Colonic mucosa (tissue), 4 donors: ENCODE measurements at regions of chr4 and their contacts with region 1.

Region 1: DNA sequence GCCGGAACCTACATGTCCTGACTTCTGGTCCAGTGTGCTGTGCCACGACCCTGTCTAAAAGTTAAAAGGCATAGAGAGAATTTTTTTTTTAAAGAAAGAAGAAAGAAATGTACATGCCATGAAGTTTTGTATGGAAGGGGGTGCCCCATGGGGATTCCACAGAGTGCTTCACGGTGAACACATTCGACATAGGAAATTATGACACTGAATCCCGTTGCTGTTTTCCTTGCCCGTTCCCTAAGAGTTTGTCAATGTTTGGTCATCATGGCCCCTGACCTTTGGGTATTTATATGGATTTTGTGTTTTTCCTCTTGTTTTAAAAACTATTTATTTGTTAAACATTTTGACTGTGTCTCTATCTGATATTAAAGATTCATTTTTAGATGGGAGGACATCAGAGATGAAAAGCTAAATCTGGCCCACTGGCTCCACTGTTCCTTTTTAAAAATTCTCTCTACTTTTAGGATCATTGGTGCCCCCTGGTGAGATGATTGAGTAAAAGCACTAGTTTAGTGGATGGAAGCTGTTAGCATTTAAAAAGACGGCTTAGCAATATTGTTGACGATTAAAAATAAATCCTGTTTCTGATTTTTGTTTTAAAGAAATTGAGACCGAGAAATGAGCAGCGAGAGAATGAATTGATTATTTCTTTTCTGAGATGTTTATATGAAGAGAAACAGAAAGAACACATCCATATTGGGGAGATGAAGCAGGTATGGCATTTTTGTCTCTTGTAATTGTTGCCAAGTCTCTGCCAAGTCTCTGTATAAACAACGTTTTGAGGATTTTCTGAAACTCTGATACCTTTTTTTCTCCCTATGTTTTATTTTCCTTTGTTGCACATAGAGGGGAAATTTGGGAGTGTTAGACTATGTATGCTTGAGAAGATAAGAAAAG is 75.0 kb downstream of the PTTG2 start:
- DNase-seq: peak; percentile 55
- H3K4me3 ChIP-seq: no peak overlapping the region
- H3K27ac ChIP-seq: no peak overlapping the region
- H3K4me1 ChIP-seq: no peaks in the 10 kb centered on the region
- H3K27me3 ChIP-seq: no peaks in the 10 kb centered on the region
- CTCF ChIP-seq: peak; percentile 62

Region 2: GRCh38 chr4:37603070-37603468 is 432.2 kb before region 1 on chr4:
- intact Hi-C with region 1: loop called (anchors 10 kb)
- DNase-seq: peak; percentile 91
- H3K4me3 ChIP-seq: no peak overlapping the region
- H3K27ac ChIP-seq: no peak overlapping the region
- H3K4me1 ChIP-seq: no peaks in the 10 kb centered on the region
- H3K27me3 ChIP-seq: no peaks in the 10 kb centered on the region
- CTCF ChIP-seq: peak; percentile 94

Region 3: GRCh38 chr4:37802068-37802666 is 233.1 kb before region 1 on chr4:
- intact Hi-C with region 1: loop called (anchors 2 kb)
- DNase-seq: peak; percentile 68
- H3K4me3 ChIP-seq: no peak overlapping the region
- H3K27ac ChIP-seq: no peak overlapping the region
- H3K4me1 ChIP-seq: no peaks in the 10 kb centered on the region
- H3K27me3 ChIP-seq: no peaks in the 10 kb centered on the region
- CTCF ChIP-seq: peak; percentile 68

Region 4: DNA sequence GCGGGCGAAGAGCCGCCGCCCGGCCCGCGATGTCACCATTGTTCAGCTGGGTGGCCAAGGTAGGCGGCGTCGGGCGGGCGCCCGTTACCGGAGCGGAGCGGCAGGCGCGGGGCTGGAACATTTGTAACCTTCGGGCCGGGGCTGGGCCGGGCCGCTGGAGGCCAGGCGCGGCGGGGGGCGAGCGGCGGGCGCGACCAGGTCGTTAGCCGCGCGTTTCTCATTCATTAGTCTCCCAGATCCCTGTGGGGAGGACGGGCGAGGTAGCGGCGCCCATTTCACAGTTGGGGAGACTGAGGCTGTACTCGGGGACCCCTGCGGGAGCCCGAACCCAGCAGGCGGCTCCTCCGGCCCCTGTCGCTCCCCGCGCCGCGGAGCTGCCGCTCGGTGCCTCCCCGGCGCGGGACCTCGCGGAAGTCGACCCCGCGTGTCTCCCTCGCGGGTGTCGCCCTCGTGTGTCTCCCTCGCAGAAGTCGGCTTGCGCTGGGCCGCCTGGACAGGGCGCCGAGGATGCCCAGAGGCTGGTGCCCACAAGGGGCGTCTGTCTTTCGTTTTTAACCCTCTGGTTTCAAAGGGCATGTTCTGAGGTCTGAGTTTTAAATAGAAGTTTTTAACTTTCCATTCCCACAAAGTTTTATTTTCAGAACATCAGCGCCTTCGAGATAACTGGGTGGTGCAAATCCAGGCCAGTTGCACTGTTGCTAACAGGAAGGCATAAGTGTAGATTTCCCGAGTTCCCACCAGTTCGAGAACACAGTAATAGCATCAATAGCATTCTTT is 57.6 kb before region 1 on chr4:
- intact Hi-C with region 1: loop called (anchors 10 kb)
- DNase-seq: peak; percentile 78
- H3K4me3 ChIP-seq: peak overlapping the region; percentile 76
- H3K27ac ChIP-seq: peak overlapping the region; percentile 86
- H3K4me1 ChIP-seq: no peaks in the 10 kb centered on the region
- H3K27me3 ChIP-seq: no peaks in the 10 kb centered on the region
- CTCF ChIP-seq: peak; percentile 54